ENCODE measurements at regions of chr19 and their contacts with region 1.

Region 1: DNA sequence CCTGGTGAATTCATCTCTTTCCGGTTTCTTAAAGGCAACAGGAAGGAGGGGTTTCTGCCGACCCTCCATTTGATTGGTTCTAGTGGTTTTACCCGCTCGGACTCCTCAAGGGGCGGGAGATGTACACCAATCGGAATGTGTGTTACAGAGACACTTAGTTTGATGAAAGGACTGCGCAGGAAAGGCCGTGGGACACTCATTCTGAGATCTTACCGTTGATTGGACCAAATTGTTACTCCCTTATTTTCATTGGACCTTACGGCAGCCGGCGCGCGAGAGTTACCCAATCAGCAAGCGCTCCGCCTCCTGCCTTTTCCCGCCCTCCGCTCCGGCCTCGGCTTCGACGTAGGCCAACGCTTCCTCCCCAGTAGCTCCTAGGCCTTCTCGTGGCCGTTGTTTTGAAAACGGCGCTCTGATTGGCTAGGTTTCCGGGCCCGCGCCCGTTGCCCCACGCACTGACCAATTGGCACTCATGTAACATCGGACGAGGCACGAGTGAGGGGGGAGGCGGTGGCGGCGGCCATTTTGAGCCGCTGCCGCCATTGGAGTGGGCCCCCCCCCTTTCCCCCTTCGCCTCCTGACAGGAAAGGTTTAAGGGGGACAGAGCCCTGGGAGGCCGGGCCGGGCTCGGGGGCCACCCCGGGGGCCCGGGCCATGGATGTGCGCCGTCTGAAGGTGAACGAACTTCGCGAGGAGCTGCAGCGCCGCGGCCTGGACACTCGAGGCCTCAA is at the start of gene HNRNPUL1:
- DNase-seq: peak; percentile 99
- ATAC-seq: peak; percentile 93
- H3K4me3 ChIP-seq: peak within 1 kb of the TSS; percentile 73 to 90
- H3K27ac ChIP-seq: peak within 1 kb of the TSS; percentile 91 to 100
- H3K4me1 ChIP-seq: no peaks in the 10 kb centered on the region
- H3K27me3 ChIP-seq: no peaks in the 10 kb centered on the region
- total RNA-seq, gene HNRNPUL1: 155 to 156 TPM

Region 2: GRCh38 chr19:41175801-41176777 is 87.9 kb before region 1 on chr19:
- intact Hi-C with region 1: no loop called
- DNase-seq: peak in 1 of 2 donors; percentile 81
- ATAC-seq: peak; percentile 66
- H3K4me3 ChIP-seq: no peak overlapping the region
- H3K27ac ChIP-seq: no peak overlapping the region
- H3K4me1 ChIP-seq: no peaks in the 10 kb centered on the region
- H3K27me3 ChIP-seq: no peaks in the 10 kb centered on the region

Region 3: GRCh38 chr19:41206926-41207750 is 56.9 kb before region 1 on chr19:
- intact Hi-C with region 1: loop called (anchors 1 to 2 kb)
- DNase-seq: peak; percentile 86 to 90
- ATAC-seq: peak; percentile 83
- H3K4me3 ChIP-seq: no peak overlapping the region
- H3K27ac ChIP-seq: peak overlapping the region in 1 of 2 donors; percentile 11
- H3K4me1 ChIP-seq: no peaks in the 10 kb centered on the region
- H3K27me3 ChIP-seq: no peaks in the 10 kb centered on the region

Region 4: GRCh38 chr19:41226053-41226873 is 37.8 kb before region 1 on chr19:
- intact Hi-C with region 1: loop called (anchors 1 to 5 kb)
- DNase-seq: peak; percentile 83 to 94
- ATAC-seq: peak; percentile 74
- H3K4me3 ChIP-seq: no peak overlapping the region
- H3K27ac ChIP-seq: peak overlapping the region; percentile 19 to 83
- H3K4me1 ChIP-seq: no peaks in the 10 kb centered on the region
- H3K27me3 ChIP-seq: no peaks in the 10 kb centered on the region

Region 5: GRCh38 chr19:41248895-41249294 is 15.1 kb before region 1 on chr19:
- intact Hi-C with region 1: no loop called
- DNase-seq: no peak
- ATAC-seq: no peak
- H3K4me3 ChIP-seq: no peak overlapping the region
- H3K27ac ChIP-seq: no peak overlapping the region
- H3K4me1 ChIP-seq: no peaks in the 10 kb centered on the region
- H3K27me3 ChIP-seq: no peaks in the 10 kb centered on the region

Region 6: GRCh38 chr19:41298348-41298964 is 34.4 kb after region 1 on chr19:
- intact Hi-C with region 1: no loop called
- DNase-seq: peak; percentile 90 to 94
- ATAC-seq: peak; percentile 80
- H3K4me3 ChIP-seq: no peak overlapping the region
- H3K27ac ChIP-seq: peak overlapping the region in 1 of 2 donors; percentile 96
- H3K4me1 ChIP-seq: peaks cover 0 to 4% of the 10 kb centered on the region in 2 donors
- H3K27me3 ChIP-seq: no peaks in the 10 kb centered on the region